GM12878 (cell line): ENCODE measurements at regions of chr9 and their contacts with region 1.

Region 1: DNA sequence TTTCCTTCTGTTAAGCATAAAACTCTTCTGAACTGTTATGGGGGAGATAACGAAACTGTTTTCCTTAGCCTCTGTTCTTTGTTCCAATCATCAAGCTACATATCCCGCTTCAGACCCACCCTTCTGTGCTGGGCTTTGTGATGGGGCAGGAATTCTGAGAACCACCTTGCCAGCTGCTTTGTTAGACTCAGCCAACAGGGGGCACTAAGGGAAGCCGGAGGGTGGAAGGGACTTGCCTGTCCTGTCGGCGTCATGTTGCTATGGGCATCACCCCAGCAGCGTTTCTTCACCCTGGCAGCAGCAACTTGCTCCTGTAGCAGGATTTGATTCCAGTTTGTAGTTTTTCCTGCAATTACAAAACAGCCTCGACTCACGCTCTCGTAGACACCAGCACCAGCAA is 169.1 kb downstream of the CAAP1 start:
- DNase-seq: no peak
- ATAC-seq: peak; percentile 86
- H3K4me3 ChIP-seq: no peak overlapping the region
- H3K27ac ChIP-seq: no peak overlapping the region
- H3K4me1 ChIP-seq: no peaks in the 10 kb centered on the region; the same call in 1 of the 2 replicates
- H3K27me3 ChIP-seq: no peaks in the 10 kb centered on the region
- CTCF ChIP-seq: peak; percentile 52 to 68 (median 55); a peak in 5 of 6 replicates
- EP300 ChIP-seq: no peak
- POLR2A ChIP-seq: no peak
- RAD21 ChIP-seq: peak; percentile 48

Region 2: GRCh38 chr9:26637101-26637500 is 86.4 kb before region 1 on chr9:
- CTCF ChIA-PET with region 1: no interaction called
- POLR2A ChIA-PET with region 1: no interaction called
- RAD21 ChIA-PET with region 1: no interaction called
- SMC1A ChIA-PET with region 1: no interaction called
- in situ Hi-C with region 1: no loop called
- intact Hi-C with region 1: no loop called
- DNase-seq: no peak
- ATAC-seq: no peak
- H3K4me3 ChIP-seq: no peak overlapping the region
- H3K27ac ChIP-seq: no peak overlapping the region
- H3K4me1 ChIP-seq: no peaks in the 10 kb centered on the region
- H3K27me3 ChIP-seq: no peaks in the 10 kb centered on the region
- CTCF ChIP-seq: no peak
- EP300 ChIP-seq: no peak
- POLR2A ChIP-seq: no peak
- RAD21 ChIP-seq: no peak

Region 3: GRCh38 chr9:26695298-26695622 is 28.2 kb before region 1 on chr9:
- CTCF ChIA-PET with region 1: no interaction called
- POLR2A ChIA-PET with region 1: no interaction called
- RAD21 ChIA-PET with region 1: no interaction called
- SMC1A ChIA-PET with region 1: no interaction called
- in situ Hi-C with region 1: no loop called
- intact Hi-C with region 1: no loop called
- DNase-seq: no peak
- ATAC-seq: no peak
- H3K4me3 ChIP-seq: no peak overlapping the region
- H3K27ac ChIP-seq: no peak overlapping the region
- H3K4me1 ChIP-seq: no peaks in the 10 kb centered on the region
- H3K27me3 ChIP-seq: no peaks in the 10 kb centered on the region
- CTCF ChIP-seq: no peak
- EP300 ChIP-seq: no peak
- POLR2A ChIP-seq: no peak
- RAD21 ChIP-seq: no peak

Region 4: GRCh38 chr9:26856413-26857032 is 133.0 kb after region 1 on chr9:
- CTCF ChIA-PET with region 1: interaction called, 51 read pairs
- POLR2A ChIA-PET with region 1: no interaction called
- RAD21 ChIA-PET with region 1: interaction called, 13 read pairs
- SMC1A ChIA-PET with region 1: interaction called, 12 read pairs
- in situ Hi-C with region 1: no loop called
- intact Hi-C with region 1: loop called (anchors 1 kb)
- DNase-seq: peak; percentile 45
- ATAC-seq: peak; percentile 97
- H3K4me3 ChIP-seq: no peak overlapping the region
- H3K27ac ChIP-seq: no peak overlapping the region
- H3K4me1 ChIP-seq: no peaks in the 10 kb centered on the region
- H3K27me3 ChIP-seq: no peaks in the 10 kb centered on the region
- CTCF ChIP-seq: peak; percentile 69 to 72 (median 70)
- EP300 ChIP-seq: no peak
- POLR2A ChIP-seq: no peak
- RAD21 ChIP-seq: peak; percentile 74